Left ventricle myocardium inferior (tissue), 1 donor: ENCODE measurements at regions of chr17 and their contacts with region 1.

Region 1: DNA sequence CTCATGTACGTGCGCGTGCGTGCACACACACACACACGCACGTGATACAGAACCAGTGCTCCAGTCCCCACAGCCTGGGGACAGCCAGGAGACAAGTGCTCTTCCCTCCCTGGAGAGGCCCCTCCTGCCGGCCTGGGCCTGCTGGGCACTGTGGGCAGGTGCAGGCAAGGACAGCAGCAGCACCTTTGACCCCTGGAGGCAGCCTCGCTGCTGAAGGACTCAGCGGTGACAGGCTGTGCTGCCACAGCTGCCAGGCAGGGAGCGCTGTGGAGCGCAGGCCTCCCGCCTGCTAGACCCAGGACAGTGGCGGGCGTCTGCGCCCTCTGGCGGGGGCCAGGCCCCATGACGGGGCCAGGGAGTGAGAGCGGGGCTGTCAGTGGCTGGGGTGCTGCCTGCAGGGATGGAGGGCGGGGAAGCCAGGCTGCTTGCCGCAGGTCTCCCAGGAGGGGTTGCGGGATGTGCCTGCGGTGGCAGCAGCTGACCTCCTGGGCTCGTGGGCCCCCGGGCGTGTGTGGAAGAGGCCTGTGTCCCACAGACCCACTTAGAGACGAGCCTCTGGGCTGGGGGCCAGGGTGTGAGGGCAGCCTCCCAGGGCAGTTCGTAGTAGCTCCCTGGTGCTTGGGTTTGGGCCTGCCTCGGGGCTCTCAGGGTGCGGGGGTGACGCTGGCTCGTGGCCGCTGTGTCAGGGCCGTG is 63.5 kb upstream of the PVALEF start:
- DNase-seq: peak; percentile 77
- H3K4me3 ChIP-seq: no peak overlapping the region
- H3K27ac ChIP-seq: no peak overlapping the region
- H3K4me1 ChIP-seq: peaks cover 23% of the 10 kb centered on the region
- H3K27me3 ChIP-seq: no peaks in the 10 kb centered on the region
- CTCF ChIP-seq: peak; percentile 100

Region 2: DNA sequence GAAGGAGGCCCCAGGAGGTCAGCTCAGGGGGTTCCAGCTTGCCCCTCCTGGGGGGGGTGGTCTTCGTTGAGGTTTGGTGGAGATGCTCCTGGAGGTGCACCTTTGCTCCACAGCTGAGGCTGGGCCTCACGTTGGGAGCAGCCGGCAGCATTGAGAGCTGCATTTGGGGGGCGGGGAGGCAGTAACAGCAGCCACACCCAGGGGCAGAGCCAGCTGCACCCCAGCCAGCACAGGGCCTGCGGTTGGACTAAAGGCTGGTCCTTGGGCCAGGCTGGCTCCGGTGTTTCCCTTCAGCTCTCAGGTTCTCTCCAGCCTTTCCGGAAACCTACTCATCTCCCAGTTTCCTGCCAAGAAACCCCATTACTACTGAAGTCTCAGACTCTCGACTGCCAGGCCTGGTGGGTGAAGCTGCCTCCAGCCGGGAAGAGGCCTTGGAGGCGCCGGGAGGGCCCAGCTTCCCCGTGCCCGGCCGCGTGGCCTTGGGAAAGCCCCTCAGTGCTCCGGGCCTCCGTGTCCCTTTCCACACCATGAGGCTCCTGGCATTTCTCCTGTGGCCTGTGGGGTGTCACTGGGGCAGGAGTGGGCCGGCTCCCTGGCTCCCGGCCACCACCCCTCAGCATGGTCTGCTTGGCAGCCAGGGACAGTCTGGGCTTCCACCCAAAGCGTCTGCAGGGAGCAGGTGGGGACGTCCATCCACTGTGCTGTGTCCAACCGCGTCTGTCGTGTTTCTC is 80.8 kb before region 1 on chr17:
- intact Hi-C with region 1: loop called (anchors 5 kb)
- DNase-seq: peak; percentile 74
- H3K4me3 ChIP-seq: no peak overlapping the region
- H3K27ac ChIP-seq: peak overlapping the region; percentile 81
- H3K4me1 ChIP-seq: peaks cover 47% of the 10 kb centered on the region
- H3K27me3 ChIP-seq: peaks cover 7% of the 10 kb centered on the region
- CTCF ChIP-seq: no peak

Region 3: GRCh38 chr17:81165246-81166032 is 63.7 kb after region 1 on chr17 and contains the start of gene PVALEF:
- intact Hi-C with region 1: no loop called
- DNase-seq: no peak
- H3K4me3 ChIP-seq: peak within 1 kb of the TSS; percentile 67
- H3K27ac ChIP-seq: peak within 1 kb of the TSS; percentile 46
- H3K4me1 ChIP-seq: peaks cover 23% of the 10 kb centered on the region
- H3K27me3 ChIP-seq: peaks cover 31% of the 10 kb centered on the region
- CTCF ChIP-seq: no peak
- total RNA-seq, gene PVALEF: not detected